Naive thymus-derived CD4-positive, alpha-beta T cell (primary cell): ENCODE measurements at regions of chr6 and their contacts with region 1.

Region 1: GRCh38 chr6:152748843-152749242 is 1.8 kb upstream of the VIP start:
- DNase-seq: no peak
- ATAC-seq: no peak
- H3K4me3 ChIP-seq: no peak overlapping the region
- H3K4me3 Mint-ChIP-seq: no peak overlapping the region
- H3K27ac ChIP-seq: no peak overlapping the region
- H3K27ac Mint-ChIP-seq: no peak overlapping the region
- H3K4me1 ChIP-seq: no peaks in the 10 kb centered on the region
- H3K4me1 Mint-ChIP-seq: no peaks in the 10 kb centered on the region
- H3K27me3 ChIP-seq: no peaks in the 10 kb centered on the region
- H3K27me3 Mint-ChIP-seq: peaks cover 0 to 5% (median 0%) of the 10 kb centered on the region in 5 donors

Region 2: GRCh38 chr6:151665317-151665716 is 1083.5 kb before region 1 on chr6:
- CTCF ChIA-PET with region 1: no interaction called
- POLR2A ChIA-PET with region 1: no interaction called
- intact Hi-C with region 1: no loop called
- DNase-seq: no peak
- ATAC-seq: no peak
- H3K4me3 ChIP-seq: no peak overlapping the region
- H3K4me3 Mint-ChIP-seq: no peak overlapping the region
- H3K27ac ChIP-seq: no peak overlapping the region
- H3K27ac Mint-ChIP-seq: no peak overlapping the region
- H3K4me1 ChIP-seq: no peaks in the 10 kb centered on the region
- H3K4me1 Mint-ChIP-seq: no peaks in the 10 kb centered on the region
- H3K27me3 ChIP-seq: peaks cover 0 to 3% of the 10 kb centered on the region in 2 donors
- H3K27me3 Mint-ChIP-seq: peaks cover 8 to 29% (median 22%) of the 10 kb centered on the region in 5 donors

Region 3: GRCh38 chr6:152948150-152948768 is 199.4 kb after region 1 on chr6:
- CTCF ChIA-PET with region 1: no interaction called
- POLR2A ChIA-PET with region 1: no interaction called
- intact Hi-C with region 1: loop called in 1 of 2 experiments (anchors 5 kb)
- DNase-seq: peak in 5 of 9 donors; percentile 9 to 35 (median 26)
- ATAC-seq: peak; percentile 72
- H3K4me3 ChIP-seq: no peak overlapping the region
- H3K4me3 Mint-ChIP-seq: peak overlapping the region in 7 of 10 donors; percentile 3 to 56 (median 41)
- H3K27ac ChIP-seq: no peak overlapping the region
- H3K27ac Mint-ChIP-seq: no peak overlapping the region
- H3K4me1 ChIP-seq: no peaks in the 10 kb centered on the region
- H3K4me1 Mint-ChIP-seq: peaks cover 0 to 11% (median 9%) of the 10 kb centered on the region in 7 donors
- H3K27me3 ChIP-seq: peaks cover 0 to 7% of the 10 kb centered on the region in 2 donors
- H3K27me3 Mint-ChIP-seq: peaks cover 17 to 44% (median 25%) of the 10 kb centered on the region in 5 donors